CD14-positive monocyte (primary cell): ENCODE measurements at regions of chr1 and their contacts with region 1.

Region 1: DNA sequence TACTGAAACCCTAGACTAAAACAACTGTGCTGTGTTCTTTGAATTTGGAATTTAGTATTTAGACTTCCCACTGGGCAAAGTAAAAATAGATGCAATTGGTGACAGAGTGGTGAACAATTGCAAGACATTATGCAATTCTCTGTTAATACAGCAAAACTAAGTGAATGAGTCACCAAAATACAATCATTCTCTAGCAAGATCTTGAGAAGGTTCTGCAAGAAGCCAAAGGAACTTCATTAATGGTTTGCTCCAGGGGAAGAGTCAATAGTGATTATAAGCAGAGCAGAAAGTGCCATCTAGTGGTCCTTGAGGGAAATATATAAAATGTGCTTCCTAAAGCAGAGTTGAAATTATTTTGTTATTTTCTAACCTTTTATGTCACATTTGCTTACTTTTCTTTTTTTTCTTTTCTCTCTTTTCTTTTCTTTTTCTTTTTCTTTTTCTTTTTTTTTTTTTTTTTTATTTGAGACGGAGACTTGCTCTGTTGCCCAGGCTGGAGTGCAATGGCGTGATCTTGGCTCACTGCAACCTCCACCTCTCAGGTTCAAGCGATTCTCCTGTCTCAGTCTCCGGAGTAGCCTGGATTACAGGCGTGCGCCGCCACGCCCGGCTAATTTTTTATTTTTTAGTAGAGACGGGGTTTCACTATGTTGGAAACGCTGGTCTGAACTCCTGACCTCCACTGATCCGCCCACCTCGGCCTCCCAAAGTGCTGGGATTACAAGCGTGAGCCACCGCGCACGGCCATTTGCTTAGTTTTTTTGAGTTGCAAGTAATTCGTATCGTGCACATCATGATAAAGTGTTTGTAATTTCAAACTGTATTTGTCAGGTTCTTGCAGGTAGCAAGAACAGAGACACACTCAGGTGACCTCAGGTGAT is 99.2 kb downstream of the CTH start:
- DNase-seq: peak; percentile 45 to 82 (median 74)
- H3K4me3 ChIP-seq: no peak overlapping the region
- H3K4me3 Mint-ChIP-seq: no peak overlapping the region
- H3K27ac ChIP-seq: no peak overlapping the region
- H3K27ac Mint-ChIP-seq: peak overlapping the region in 1 of 7 donors; percentile 64
- H3K4me1 ChIP-seq: no peaks in the 10 kb centered on the region
- H3K4me1 Mint-ChIP-seq: peaks cover 2% of the 10 kb centered on the region
- H3K27me3 ChIP-seq: no peaks in the 10 kb centered on the region
- H3K27me3 Mint-ChIP-seq: peaks cover 0 to 2% (median 0%) of the 10 kb centered on the region in 3 donors
- CTCF ChIP-seq: peak; percentile 81

Region 2: DNA sequence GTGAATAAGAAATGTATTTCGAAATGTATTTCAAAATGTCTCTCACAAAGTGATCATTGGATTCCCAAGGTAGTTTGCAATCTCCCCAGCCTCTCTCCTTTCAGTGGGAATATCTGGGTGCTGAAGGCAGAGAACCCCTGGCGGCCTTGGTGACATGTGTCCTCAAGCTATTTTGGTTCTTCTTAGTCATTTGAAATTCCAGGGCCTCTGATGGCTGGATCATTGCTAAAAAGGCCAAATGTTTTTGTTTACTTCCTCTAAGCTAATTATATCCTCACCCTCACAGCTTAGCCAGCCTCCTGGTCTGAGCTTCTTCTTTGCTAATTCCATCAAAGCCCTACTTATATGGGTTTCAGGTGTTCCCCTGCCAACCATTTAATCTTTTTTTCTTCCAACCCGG is 376.1 kb before region 1 on chr1:
- intact Hi-C with region 1: loop called (anchors 5 kb)
- DNase-seq: no peak
- H3K4me3 ChIP-seq: no peak overlapping the region
- H3K4me3 Mint-ChIP-seq: no peak overlapping the region
- H3K27ac ChIP-seq: no peak overlapping the region
- H3K27ac Mint-ChIP-seq: no peak overlapping the region
- H3K4me1 ChIP-seq: no peaks in the 10 kb centered on the region
- H3K4me1 Mint-ChIP-seq: peaks cover 4% of the 10 kb centered on the region
- H3K27me3 ChIP-seq: no peaks in the 10 kb centered on the region
- H3K27me3 Mint-ChIP-seq: peaks cover 0 to 3% (median 0%) of the 10 kb centered on the region in 3 donors
- CTCF ChIP-seq: no peak

Region 3: GRCh38 chr1:70190180-70190579 is 320.1 kb before region 1 on chr1:
- intact Hi-C with region 1: no loop called
- DNase-seq: no peak
- H3K4me3 ChIP-seq: no peak overlapping the region
- H3K4me3 Mint-ChIP-seq: no peak overlapping the region
- H3K27ac ChIP-seq: no peak overlapping the region
- H3K27ac Mint-ChIP-seq: no peak overlapping the region
- H3K4me1 ChIP-seq: no peaks in the 10 kb centered on the region
- H3K4me1 Mint-ChIP-seq: no peaks in the 10 kb centered on the region
- H3K27me3 ChIP-seq: no peaks in the 10 kb centered on the region
- H3K27me3 Mint-ChIP-seq: no peaks in the 10 kb centered on the region
- CTCF ChIP-seq: no peak

Region 4: DNA sequence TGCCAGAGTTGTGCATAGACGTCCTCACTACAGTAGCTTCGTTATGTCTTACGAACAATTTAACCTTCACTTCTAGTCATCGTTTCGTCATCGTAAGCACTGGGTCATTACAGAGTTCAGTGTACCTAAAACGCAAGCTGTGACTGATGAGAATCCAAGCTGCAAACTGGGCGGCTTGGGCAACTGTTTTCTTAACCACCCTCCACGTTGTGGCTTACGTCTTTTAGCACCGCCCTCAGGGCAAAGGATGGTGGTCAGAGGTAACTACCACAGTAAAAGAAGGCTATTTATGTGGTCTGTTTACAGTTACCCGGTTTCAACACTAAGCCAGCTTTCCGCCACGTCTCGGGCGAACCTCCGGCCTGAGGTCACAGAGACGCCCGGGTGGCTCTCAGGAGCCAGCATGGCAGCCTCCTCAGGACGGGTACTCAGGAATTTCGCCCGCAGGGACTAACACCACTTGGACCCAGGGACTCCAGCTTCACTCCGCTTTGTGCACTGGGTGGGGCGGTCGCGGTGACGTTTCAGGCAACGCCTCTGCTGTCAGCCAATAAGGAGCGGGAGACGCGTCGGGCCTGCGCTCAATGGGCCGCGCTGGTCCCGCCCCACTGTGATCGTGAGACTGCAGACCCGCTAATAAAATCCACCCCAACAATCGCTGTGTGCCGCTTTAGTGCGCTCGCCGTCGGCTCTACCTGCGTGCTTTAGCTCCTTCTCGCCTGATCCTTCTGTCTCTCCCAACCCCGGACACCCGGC is 99.5 kb before region 1 on chr1 and contains the start of gene CTH:
- intact Hi-C with region 1: loop called in 1 of 2 experiments (anchors 10 kb)
- DNase-seq: peak; percentile 92 to 93 (median 92)
- H3K4me3 ChIP-seq: peak within 1 kb of the TSS; percentile 43 to 82 (median 77)
- H3K4me3 Mint-ChIP-seq: peak within 1 kb of the TSS; percentile 98 to 99
- H3K27ac ChIP-seq: peak within 1 kb of the TSS; percentile 90 to 94
- H3K27ac Mint-ChIP-seq: peak within 1 kb of the TSS; percentile 92 to 99 (median 97)
- H3K4me1 ChIP-seq: peaks cover 10 to 15% of the 10 kb centered on the region in 2 donors
- H3K4me1 Mint-ChIP-seq: peaks cover 15% of the 10 kb centered on the region
- H3K27me3 ChIP-seq: no peaks in the 10 kb centered on the region
- H3K27me3 Mint-ChIP-seq: peaks cover 3 to 14% (median 8%) of the 10 kb centered on the region in 3 donors
- CTCF ChIP-seq: no peak
- polyA plus RNA-seq, gene CTH: 0.16 to 1.5 (median 0.28) TPM

Region 5: GRCh38 chr1:70449049-70449448 is 61.2 kb before region 1 on chr1:
- intact Hi-C with region 1: no loop called
- DNase-seq: no peak
- H3K4me3 ChIP-seq: no peak overlapping the region
- H3K4me3 Mint-ChIP-seq: no peak overlapping the region
- H3K27ac ChIP-seq: no peak overlapping the region
- H3K27ac Mint-ChIP-seq: no peak overlapping the region
- H3K4me1 ChIP-seq: no peaks in the 10 kb centered on the region
- H3K4me1 Mint-ChIP-seq: no peaks in the 10 kb centered on the region
- H3K27me3 ChIP-seq: no peaks in the 10 kb centered on the region
- H3K27me3 Mint-ChIP-seq: peaks cover 0 to 3% (median 0%) of the 10 kb centered on the region in 3 donors
- CTCF ChIP-seq: no peak